ENCODE measurements at regions of chr17 and their contacts with region 1.

Region 1: DNA sequence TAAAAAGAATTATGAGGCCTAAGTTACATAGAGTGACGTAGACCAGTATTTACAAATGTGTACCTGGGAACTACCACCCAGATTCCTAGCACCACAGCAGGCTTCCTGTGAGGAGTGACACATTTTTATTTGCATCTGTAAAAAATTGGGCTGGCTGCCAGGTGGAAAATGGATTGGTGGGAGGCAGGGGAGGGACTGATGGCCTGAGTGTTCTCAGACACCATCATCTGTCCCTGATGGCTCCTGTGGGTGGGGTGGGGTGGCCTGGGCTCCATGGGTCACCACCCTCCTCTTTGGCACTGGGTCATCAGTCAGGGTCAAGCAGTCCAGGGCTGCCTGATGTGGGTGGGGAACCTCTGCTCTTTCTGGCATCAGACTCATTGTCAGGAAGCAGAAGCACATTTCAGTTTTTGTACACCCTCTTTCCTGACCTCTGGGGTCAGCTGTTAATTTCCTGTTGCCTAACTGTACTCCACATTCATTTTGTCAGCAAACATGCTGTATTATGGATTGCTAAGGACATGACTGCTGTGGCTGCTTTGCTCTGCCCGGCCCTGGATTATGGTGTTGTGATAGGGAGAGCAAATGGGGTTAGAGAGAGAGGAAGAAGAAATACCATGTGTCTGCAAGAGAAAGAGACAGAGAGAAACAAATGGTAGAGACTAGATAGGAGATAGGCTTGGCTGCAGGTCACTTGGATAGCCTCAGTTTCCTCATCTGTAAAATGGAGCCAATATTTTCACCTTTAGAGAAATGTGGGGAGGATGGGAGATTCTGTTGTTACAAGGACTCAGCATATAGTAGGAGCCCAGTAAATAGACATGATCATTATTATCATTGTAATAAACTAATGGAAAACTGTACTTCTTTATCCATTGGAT is 11.6 kb upstream of the MFAP4 start:
- DNase-seq: peak; percentile 87 to 91 (median 90)
- H3K4me3 ChIP-seq: peak overlapping the region in 1 of 3 experiments; percentile 16
- H3K4me3 Mint-ChIP-seq: peak overlapping the region; percentile 9 to 55
- H3K27ac ChIP-seq: peak overlapping the region; percentile 93 to 94
- H3K27ac Mint-ChIP-seq: peak overlapping the region; percentile 90 to 99 (median 97)
- H3K4me1 ChIP-seq: peaks cover 36 to 37% of the 10 kb centered on the region in 2 donors
- H3K4me1 Mint-ChIP-seq: peaks cover 36% of the 10 kb centered on the region
- H3K27me3 ChIP-seq: no peaks in the 10 kb centered on the region
- H3K27me3 Mint-ChIP-seq: peaks cover 0 to 5% (median 2%) of the 10 kb centered on the region in 3 donors
- CTCF ChIP-seq: no peak

Region 2: GRCh38 chr17:19369846-19370492 is 28.6 kb before region 1 on chr17:
- intact Hi-C with region 1: loop called in 1 of 2 experiments (anchors 5 kb)
- DNase-seq: peak; percentile 81 to 84 (median 82)
- H3K4me3 ChIP-seq: peak overlapping the region in 1 of 3 experiments; percentile 53
- H3K4me3 Mint-ChIP-seq: peak overlapping the region; percentile 69 to 81
- H3K27ac ChIP-seq: peak overlapping the region; percentile 71 to 85
- H3K27ac Mint-ChIP-seq: peak overlapping the region; percentile 94 to 100 (median 97)
- H3K4me1 ChIP-seq: peaks cover 57 to 61% of the 10 kb centered on the region in 2 donors
- H3K4me1 Mint-ChIP-seq: peaks cover 65% of the 10 kb centered on the region
- H3K27me3 ChIP-seq: peaks cover 0 to 2% of the 10 kb centered on the region in 2 donors
- H3K27me3 Mint-ChIP-seq: peaks cover 6 to 32% (median 21%) of the 10 kb centered on the region in 3 donors
- CTCF ChIP-seq: no peak

Region 3: GRCh38 chr17:19377602-19378392 is 20.7 kb before region 1 on chr17:
- intact Hi-C with region 1: loop called in 1 of 2 experiments (anchors 2 kb)
- DNase-seq: peak; percentile 98 to 99 (median 99)
- H3K4me3 ChIP-seq: peak overlapping the region; percentile 54 to 90 (median 88)
- H3K4me3 Mint-ChIP-seq: peak overlapping the region; percentile 98 to 99
- H3K27ac ChIP-seq: peak overlapping the region; percentile 94 to 96
- H3K27ac Mint-ChIP-seq: peak overlapping the region; percentile 99 to 100 (median 100)
- H3K4me1 ChIP-seq: peaks cover 29 to 35% of the 10 kb centered on the region in 2 donors
- H3K4me1 Mint-ChIP-seq: peaks cover 27% of the 10 kb centered on the region
- H3K27me3 ChIP-seq: no peaks in the 10 kb centered on the region
- H3K27me3 Mint-ChIP-seq: peaks cover 0 to 5% (median 3%) of the 10 kb centered on the region in 3 donors
- CTCF ChIP-seq: no peak

Region 4: GRCh38 chr17:19386974-19387920 is 11.3 kb before region 1 on chr17 and contains the start of gene MFAP4:
- intact Hi-C with region 1: loop called in 1 of 2 experiments (anchors 1 kb)
- DNase-seq: no peak
- H3K4me3 ChIP-seq: peak within 1 kb of the TSS in 1 of 3 experiments; percentile 47
- H3K4me3 Mint-ChIP-seq: peak within 1 kb of the TSS; percentile 39 to 60
- H3K27ac ChIP-seq: peak within 1 kb of the TSS; percentile 71 to 85
- H3K27ac Mint-ChIP-seq: peak within 1 kb of the TSS; percentile 94 to 98 (median 97)
- H3K4me1 ChIP-seq: peaks cover 64 to 69% of the 10 kb centered on the region in 2 donors
- H3K4me1 Mint-ChIP-seq: peaks cover 70% of the 10 kb centered on the region
- H3K27me3 ChIP-seq: no peaks in the 10 kb centered on the region
- H3K27me3 Mint-ChIP-seq: peaks cover 0 to 7% (median 2%) of the 10 kb centered on the region in 3 donors
- CTCF ChIP-seq: no peak
- polyA plus RNA-seq, gene MFAP4: 0.12 to 0.73 (median 0.12) TPM

Region 5: GRCh38 chr17:19457830-19458271 is 59.3 kb after region 1 on chr17:
- intact Hi-C with region 1: no loop called
- DNase-seq: no peak
- H3K4me3 ChIP-seq: no peak overlapping the region
- H3K4me3 Mint-ChIP-seq: no peak overlapping the region
- H3K27ac ChIP-seq: no peak overlapping the region
- H3K27ac Mint-ChIP-seq: peak overlapping the region in 2 of 7 donors; percentile 38 to 58
- H3K4me1 ChIP-seq: peaks cover 24 to 25% of the 10 kb centered on the region in 2 donors
- H3K4me1 Mint-ChIP-seq: peaks cover 31% of the 10 kb centered on the region
- H3K27me3 ChIP-seq: peaks cover 3 to 4% of the 10 kb centered on the region in 2 donors
- H3K27me3 Mint-ChIP-seq: peaks cover 8 to 24% (median 9%) of the 10 kb centered on the region in 3 donors
- CTCF ChIP-seq: no peak